Dendritic cell treated with granulocyte-macrophage colony-stimulating factor and Interleukin-4, amounts not matched to agents 40 ng/mL and 50 ng/mL, for 4 days (primary cell): ENCODE measurements at regions of chr5 and their contacts with region 1.

Region 1: DNA sequence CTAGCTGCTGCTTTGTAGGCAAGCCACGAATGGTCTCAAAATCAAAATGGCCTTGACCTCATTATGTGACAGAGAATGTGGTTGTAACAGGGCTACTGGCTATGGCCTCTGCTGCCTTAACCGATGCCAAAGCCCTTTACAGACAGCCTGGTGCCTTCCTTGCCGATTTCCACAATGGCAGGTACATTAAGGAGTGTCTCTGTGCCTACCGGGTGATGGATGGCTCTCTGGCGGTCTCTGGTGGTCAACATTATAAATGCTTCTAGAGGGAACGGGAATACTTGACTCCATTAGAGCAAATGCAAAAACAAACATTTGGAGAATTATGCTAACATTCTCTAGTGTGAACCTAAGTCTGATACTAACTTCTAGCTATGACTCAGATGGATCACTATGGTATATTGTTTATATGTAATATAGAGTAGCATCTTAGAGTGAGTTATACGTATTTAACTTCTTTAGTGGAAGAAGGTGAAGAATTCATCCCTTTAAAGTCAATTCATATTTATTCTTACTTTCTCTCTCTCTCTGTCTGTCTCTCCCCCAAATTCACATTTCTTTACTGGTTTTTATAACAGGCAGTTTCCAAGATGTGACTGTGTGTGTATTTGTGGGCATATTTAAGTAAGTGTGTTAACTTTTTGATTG is 52.5 kb downstream of the RPS23 start:
- H3K4me3 Mint-ChIP-seq: no peak overlapping the region
- H3K27ac Mint-ChIP-seq: no peak overlapping the region
- H3K4me1 Mint-ChIP-seq: peaks cover 11% of the 10 kb centered on the region
- H3K27me3 Mint-ChIP-seq: no peaks in the 10 kb centered on the region

Region 2: GRCh38 chr5:81425569-81425968 is 800.1 kb before region 1 on chr5:
- intact Hi-C with region 1: loop called (anchors 1 kb)
- H3K4me3 Mint-ChIP-seq: no peak overlapping the region
- H3K27ac Mint-ChIP-seq: no peak overlapping the region
- H3K4me1 Mint-ChIP-seq: peaks cover 19% of the 10 kb centered on the region
- H3K27me3 Mint-ChIP-seq: no peaks in the 10 kb centered on the region

Region 3: GRCh38 chr5:81513982-81514381 is 711.7 kb before region 1 on chr5:
- intact Hi-C with region 1: loop called (anchors 5 kb)
- H3K4me3 Mint-ChIP-seq: no peak overlapping the region
- H3K27ac Mint-ChIP-seq: no peak overlapping the region
- H3K4me1 Mint-ChIP-seq: no peaks in the 10 kb centered on the region
- H3K27me3 Mint-ChIP-seq: no peaks in the 10 kb centered on the region

Region 4: DNA sequence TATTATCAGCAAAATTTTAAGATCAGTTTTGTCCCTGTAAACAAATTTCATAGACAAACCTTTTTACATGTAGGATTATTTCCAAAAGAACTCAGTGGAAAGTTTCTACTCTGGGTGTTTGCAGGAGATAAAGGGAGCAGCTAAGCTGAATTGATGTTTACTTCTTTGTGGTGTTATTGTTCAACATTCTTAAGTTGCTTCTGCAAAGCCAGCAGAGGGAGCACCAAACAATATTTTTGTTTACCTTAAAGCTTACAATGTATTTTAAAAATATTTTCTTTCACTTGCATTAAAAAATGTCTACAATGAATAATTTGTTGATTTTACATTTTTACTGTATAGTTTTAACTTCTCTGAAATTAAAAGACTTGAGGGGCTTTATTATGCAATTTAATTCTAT is 118.4 kb before region 1 on chr5:
- intact Hi-C with region 1: loop called (anchors 1 kb)
- H3K4me3 Mint-ChIP-seq: no peak overlapping the region
- H3K27ac Mint-ChIP-seq: no peak overlapping the region
- H3K4me1 Mint-ChIP-seq: peaks cover 10% of the 10 kb centered on the region
- H3K27me3 Mint-ChIP-seq: no peaks in the 10 kb centered on the region